Left lung (tissue), 14 donors: ENCODE measurements at regions of chr16 and their contacts with region 1.

Region 1: DNA sequence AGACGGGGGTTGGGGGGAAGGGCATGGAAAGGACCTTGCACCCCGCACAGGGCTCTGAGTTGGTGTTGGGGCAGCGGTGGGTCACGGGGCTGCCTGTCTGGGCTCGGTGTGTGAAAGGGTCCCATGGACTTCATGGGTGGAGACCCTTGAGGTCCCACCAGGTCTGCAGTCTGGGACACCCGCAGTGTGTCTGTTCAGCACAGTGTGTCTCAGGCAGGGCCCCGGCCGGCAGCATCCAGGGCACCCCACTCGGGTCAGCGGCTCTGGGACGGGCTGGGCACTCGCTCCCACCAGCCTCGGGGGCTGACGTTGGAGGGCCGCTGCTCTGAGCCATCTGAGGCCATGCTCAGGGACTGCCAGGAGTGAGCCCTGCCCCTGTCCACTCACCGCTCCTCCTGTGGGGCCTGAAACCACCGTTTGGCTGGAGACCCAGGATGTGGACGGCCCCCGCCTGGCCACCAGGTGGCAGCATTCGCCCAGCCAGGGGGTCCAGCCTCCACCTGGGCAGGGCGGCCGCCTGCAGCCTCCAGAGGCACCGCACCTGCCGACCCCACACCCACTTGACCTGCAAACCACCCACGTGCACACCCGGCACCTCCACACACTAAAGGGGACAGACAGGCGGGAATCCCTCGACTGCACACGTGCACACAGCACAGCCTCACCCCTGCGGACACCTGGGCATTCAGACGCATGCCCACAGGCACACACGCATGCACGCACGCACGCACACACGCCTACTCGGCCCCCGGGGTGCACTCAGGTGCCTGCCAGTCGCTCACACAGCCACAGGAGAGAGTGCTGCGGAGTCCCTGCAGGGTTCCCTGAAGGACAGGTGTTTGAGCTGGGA is 10.1 kb upstream of the ZFPM1 start:
- DNase-seq: peak in 3 of 4 donors; percentile 70 to 94 (median 77)
- ATAC-seq: peak; percentile 95
- H3K4me3 ChIP-seq: no peak overlapping the region
- H3K27ac ChIP-seq: no peak overlapping the region
- H3K4me1 ChIP-seq: peaks cover 0 to 2% of the 10 kb centered on the region in 2 donors
- H3K27me3 ChIP-seq: peaks cover 0 to 46% of the 10 kb centered on the region in 2 donors
- CTCF ChIP-seq: peak; percentile 91 to 96

Region 2: GRCh38 chr16:88487920-88488851 is 45.2 kb after region 1 on chr16:
- intact Hi-C with region 1: no loop called
- DNase-seq: peak in 1 of 4 donors; percentile 60
- ATAC-seq: no peak
- H3K4me3 ChIP-seq: no peak overlapping the region
- H3K27ac ChIP-seq: no peak overlapping the region
- H3K4me1 ChIP-seq: no peaks in the 10 kb centered on the region
- H3K27me3 ChIP-seq: no peaks in the 10 kb centered on the region
- CTCF ChIP-seq: no peak

Region 3: GRCh38 chr16:88515925-88516594 is 73.1 kb after region 1 on chr16:
- intact Hi-C with region 1: no loop called
- DNase-seq: no peak
- ATAC-seq: no peak
- H3K4me3 ChIP-seq: no peak overlapping the region
- H3K27ac ChIP-seq: no peak overlapping the region
- H3K4me1 ChIP-seq: no peaks in the 10 kb centered on the region
- H3K27me3 ChIP-seq: no peaks in the 10 kb centered on the region
- CTCF ChIP-seq: no peak

Region 4: GRCh38 chr16:88527186-88527936 is 84.4 kb after region 1 on chr16:
- intact Hi-C with region 1: loop called in 1 of 2 experiments (anchors 5 kb)
- DNase-seq: peak in 3 of 4 donors; percentile 56 to 88 (median 79)
- ATAC-seq: peak; percentile 81
- H3K4me3 ChIP-seq: no peak overlapping the region
- H3K27ac ChIP-seq: no peak overlapping the region
- H3K4me1 ChIP-seq: peaks cover 4 to 5% of the 10 kb centered on the region in 2 donors
- H3K27me3 ChIP-seq: peaks cover 7 to 37% of the 10 kb centered on the region in 2 donors
- CTCF ChIP-seq: peak; percentile 74 to 91

Region 5: DNA sequence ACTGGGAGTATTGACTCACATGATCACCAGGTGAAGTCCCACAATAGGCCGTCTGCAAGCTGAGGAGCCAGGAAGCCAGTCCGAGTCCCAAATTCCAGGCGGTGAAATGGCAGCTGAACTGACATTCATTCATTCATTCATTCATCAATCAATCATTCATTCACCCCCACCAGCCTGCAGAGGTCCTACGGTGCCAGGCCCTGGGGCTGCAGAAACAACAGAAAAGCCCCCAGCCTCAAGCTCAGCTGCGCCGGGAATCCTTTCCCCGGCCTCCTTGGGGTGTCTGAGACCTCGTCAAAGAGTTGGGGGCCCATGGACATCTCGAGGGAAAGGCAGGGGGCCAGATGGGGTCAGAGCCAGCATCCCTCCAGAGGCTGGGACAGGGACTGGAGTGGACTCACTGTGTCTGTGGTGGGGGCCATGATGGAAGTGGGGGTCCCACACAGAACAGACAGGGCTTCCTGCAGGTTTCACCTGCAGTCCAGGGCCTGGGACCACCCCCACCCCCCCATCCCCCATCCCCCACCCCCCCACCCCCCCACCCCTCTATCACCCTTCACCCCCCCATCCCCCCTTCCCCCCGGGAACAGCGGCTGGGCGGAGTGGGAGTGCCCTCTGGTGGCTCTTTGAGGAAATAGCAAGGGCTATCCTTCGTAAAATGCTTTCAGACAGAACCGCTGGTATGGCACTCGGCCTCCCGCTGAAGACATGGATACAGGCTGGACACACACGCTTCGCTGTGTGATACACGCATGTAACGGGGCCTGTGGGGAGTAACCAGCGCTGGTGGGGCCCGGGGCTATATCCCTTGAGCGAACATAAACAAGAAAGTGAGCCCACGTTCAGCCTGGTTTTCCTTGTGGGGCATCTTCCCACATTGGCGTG is 118.8 kb after region 1 on chr16:
- intact Hi-C with region 1: loop called in 1 of 2 experiments (anchors 5 kb)
- DNase-seq: peak in 3 of 4 donors; percentile 26 to 49 (median 48)
- ATAC-seq: peak; percentile 87
- H3K4me3 ChIP-seq: no peak overlapping the region
- H3K27ac ChIP-seq: no peak overlapping the region
- H3K4me1 ChIP-seq: no peaks in the 10 kb centered on the region
- H3K27me3 ChIP-seq: peaks cover 0 to 44% of the 10 kb centered on the region in 2 donors
- CTCF ChIP-seq: peak; percentile 40 to 63